GM23248 (cell line): ENCODE measurements at regions of chr5 and their contacts with region 1.

Region 1: DNA sequence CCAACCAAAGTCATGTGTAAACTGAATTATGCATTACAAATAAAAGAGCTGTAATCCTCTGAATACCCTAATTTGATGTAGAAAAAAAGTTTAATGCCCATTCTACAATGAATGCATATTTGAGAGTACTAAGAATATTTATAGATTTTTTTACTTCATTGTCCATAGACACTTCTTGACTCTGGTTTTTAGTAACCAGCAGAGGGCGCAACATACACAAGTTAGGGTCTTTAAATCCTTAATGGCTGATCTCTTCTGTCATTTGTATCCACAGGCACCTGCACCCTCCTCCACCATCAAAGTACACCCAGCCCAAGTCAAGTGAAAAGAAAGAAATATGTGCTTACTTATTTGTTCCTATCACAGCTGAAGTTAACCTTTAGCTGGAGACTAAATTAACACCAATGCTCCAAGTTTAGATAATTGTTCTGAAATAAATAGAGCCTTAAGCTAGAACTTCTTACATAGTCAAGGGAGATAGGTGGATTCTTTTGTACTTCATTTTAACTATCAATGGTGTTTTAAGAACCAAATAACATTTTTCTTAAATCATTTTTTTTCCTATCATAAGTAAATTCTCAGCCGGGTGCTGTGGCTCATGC is 524.2 kb upstream of the DAB2 start:
- DNase-seq: peak; percentile 76
- H3K4me3 ChIP-seq: no peak overlapping the region
- H3K27ac ChIP-seq: no peak overlapping the region
- H3K4me1 ChIP-seq: no peaks in the 10 kb centered on the region
- H3K27me3 ChIP-seq: no peaks in the 10 kb centered on the region

Region 2: DNA sequence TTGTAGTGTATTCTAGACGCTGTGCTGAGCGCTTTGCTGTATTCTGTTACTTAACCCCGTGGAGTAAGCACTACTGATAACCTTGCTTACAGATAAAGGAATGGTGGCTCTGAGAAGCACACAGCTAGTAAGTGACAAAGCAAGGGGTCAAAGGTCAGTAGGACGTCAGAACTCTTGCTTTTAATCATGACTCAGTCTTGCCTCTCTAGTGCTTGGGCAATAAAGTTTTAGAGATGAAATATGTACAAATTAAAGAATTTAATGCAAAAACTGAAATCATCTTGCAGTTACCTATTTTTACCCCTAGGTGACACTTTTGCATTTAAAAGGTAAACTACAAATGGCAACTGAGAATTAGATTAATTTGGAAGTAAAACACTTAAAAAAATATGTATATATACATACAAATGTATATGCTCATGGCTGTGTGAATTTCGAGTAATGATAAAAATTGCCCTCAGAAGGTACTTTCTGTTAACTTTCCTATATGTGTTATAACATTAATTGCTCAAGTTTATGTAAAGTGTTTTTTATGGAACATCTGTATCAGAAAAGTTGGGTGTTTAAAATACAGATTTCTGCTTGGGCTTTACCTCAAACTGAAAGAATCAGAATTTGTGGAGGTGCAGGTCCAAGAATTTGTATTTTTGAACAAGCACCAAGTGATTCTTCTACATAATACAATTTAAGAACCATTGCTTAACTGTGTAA is 349.1 kb before region 1 on chr5:
- in situ Hi-C with region 1: loop called (anchors 25 kb)
- DNase-seq: peak; percentile 76
- H3K4me3 ChIP-seq: no peak overlapping the region
- H3K27ac ChIP-seq: no peak overlapping the region
- H3K4me1 ChIP-seq: 0 out of 2 replicates have a peak, but pooled peaks cover 3% of the 10 kb centered on the region
- H3K27me3 ChIP-seq: no peaks in the 10 kb centered on the region; the same call in 1 of the 2 replicates

Region 3: GRCh38 chr5:39714036-39714698 is 234.8 kb before region 1 on chr5:
- in situ Hi-C with region 1: loop called (anchors 25 kb)
- DNase-seq: peak; percentile 70
- H3K4me3 ChIP-seq: no peak overlapping the region
- H3K27ac ChIP-seq: no peak overlapping the region
- H3K4me1 ChIP-seq: peaks cover 15% of the 10 kb centered on the region; the same call in 1 of the 2 replicates
- H3K27me3 ChIP-seq: no peaks in the 10 kb centered on the region

Region 4: GRCh38 chr5:40688127-40688761 is 739.3 kb after region 1 on chr5:
- in situ Hi-C with region 1: loop called (anchors 10 kb)
- DNase-seq: peak; percentile 84
- H3K4me3 ChIP-seq: no peak overlapping the region
- H3K27ac ChIP-seq: no peak overlapping the region
- H3K4me1 ChIP-seq: peaks cover 16% of the 10 kb centered on the region
- H3K27me3 ChIP-seq: no peaks in the 10 kb centered on the region